Mammary epithelial cell (primary cell): ENCODE measurements at regions of chr5 and their contacts with region 1.

Region 1: GRCh38 chr5:159100025-159100781 is 487 bp upstream of the EBF1 start:
- DNase-seq: peak; percentile 87
- H3K4me3 ChIP-seq: peak overlapping the region in 2 of 3 experiments; percentile 13 to 35
- H3K27ac ChIP-seq: no peak overlapping the region
- H3K4me1 ChIP-seq: peaks cover 12% of the 10 kb centered on the region
- H3K27me3 ChIP-seq: peaks cover 55% of the 10 kb centered on the region
- CTCF ChIP-seq: no peak

Region 2: DNA sequence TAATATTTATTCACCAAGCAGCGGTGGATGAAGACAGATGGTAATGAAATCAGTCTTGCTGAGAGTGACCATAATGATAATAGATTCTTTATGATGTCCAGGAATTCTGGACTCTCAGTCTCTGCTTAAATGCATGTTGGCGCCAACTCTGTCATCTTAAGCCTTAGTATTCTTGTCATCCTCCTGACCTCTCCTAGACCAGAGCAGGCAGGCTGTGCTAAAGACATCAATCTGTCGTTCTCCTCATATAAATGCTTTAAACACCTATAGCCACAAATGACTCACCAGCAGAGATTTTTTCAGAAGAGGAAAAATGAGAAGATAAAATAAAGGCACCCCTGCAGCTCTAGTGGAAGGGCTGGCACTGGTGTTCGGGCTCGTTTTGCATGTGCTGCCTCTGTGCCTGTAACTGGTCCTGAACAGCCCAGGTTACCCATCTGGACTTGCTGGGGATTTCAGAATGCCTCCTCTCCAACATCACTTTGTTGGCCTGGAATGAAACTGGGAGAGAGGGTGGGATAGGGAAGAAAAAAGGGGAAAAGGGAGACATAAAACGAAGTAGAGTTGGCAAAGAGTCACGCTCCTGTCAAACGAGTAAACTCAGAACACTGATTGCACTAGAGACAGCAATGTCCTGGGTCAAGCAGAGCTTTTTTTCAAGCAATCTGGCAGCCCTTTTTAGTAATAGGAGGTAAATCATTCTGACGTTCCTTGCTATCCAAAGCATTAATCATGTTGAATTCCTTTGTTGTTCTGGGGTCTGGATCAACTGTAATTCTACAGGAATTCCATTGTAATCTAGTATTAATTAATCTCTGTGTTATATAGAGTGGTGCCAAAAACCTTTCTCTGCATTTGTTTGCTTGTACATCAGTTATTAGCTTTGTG is 1045.7 kb before region 1 on chr5:
- CTCF ChIA-PET with region 1: no interaction called
- dilution Hi-C with region 1: no loop called
- in situ Hi-C with region 1: no loop called
- intact Hi-C with region 1: loop called (anchors 5 kb)
- DNase-seq: no peak
- H3K4me3 ChIP-seq: no peak overlapping the region
- H3K27ac ChIP-seq: no peak overlapping the region
- H3K4me1 ChIP-seq: peaks cover 4% of the 10 kb centered on the region
- H3K27me3 ChIP-seq: no peaks in the 10 kb centered on the region
- CTCF ChIP-seq: no peak

Region 3: DNA sequence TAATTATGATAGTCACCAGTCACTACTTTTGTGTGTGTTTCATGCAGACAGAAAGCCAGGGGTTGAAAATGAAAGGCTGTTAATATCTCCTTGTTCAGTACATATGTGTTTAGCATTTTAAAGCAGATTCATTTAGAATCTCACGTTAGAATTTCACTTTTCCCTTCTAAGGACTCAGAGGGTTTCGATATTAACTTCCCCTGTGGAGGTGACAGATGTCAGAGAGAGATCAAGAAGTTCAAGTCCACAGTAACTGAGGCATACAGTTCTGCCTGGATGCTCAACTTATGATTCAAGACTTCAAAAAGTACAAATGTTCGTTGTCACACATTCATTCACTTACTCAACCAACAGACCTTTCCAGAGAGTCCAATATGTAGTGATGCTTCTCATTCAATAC is 251.6 kb before region 1 on chr5:
- CTCF ChIA-PET with region 1: no interaction called
- dilution Hi-C with region 1: no loop called
- in situ Hi-C with region 1: no loop called
- intact Hi-C with region 1: no loop called
- DNase-seq: no peak
- H3K4me3 ChIP-seq: no peak overlapping the region
- H3K27ac ChIP-seq: no peak overlapping the region
- H3K4me1 ChIP-seq: no peaks in the 10 kb centered on the region
- H3K27me3 ChIP-seq: no peaks in the 10 kb centered on the region
- CTCF ChIP-seq: no peak

Region 4: DNA sequence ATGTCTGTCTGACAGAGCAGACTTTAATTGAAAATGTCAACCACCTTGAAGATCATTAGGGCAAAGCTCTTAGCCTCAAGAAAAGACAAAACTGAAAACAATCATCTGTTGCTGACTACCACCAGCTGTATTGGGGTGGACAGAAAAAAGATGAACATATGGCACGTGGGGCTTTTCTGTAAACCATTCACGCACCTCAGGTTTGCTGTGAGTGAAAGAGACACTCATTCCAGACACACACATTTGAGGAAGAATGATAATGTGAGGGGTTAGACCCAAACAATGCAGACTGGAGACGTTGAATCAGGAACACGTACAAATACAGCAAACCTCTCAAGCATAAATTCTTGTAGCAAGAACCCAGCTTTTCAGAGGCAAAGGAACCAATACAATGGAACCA is 159.2 kb before region 1 on chr5:
- CTCF ChIA-PET with region 1: no interaction called
- dilution Hi-C with region 1: no loop called
- in situ Hi-C with region 1: no loop called
- intact Hi-C with region 1: no loop called
- DNase-seq: no peak
- H3K4me3 ChIP-seq: no peak overlapping the region
- H3K27ac ChIP-seq: no peak overlapping the region
- H3K4me1 ChIP-seq: peaks cover 7% of the 10 kb centered on the region
- H3K27me3 ChIP-seq: peaks cover 3% of the 10 kb centered on the region
- CTCF ChIP-seq: no peak

Region 5: DNA sequence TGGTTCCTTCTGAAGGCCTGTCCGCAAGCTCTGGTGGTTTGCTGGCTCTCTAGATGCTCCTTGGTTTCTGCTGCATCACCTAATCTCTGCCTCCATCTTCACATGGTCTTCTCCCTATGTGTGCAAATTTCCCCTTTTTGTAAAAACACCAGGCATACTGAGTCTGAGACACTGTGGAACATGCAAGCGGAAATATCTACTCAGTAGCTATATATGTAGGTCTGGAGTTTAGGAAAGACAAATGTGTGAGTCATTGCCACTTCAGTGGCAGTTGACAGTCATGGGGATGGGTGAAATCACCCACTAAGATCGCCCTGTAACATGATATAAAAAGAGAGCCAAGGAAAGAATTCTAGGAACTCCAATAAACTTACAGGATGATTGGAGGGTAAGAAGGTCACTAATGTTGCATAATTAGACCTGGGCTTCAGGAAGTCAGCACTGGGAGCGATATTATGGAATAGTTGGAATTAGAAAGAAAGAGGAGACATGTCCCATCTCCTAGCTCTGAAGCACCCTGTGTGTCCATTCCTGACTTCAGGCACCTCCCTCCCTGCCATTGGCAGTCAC is 140.2 kb after region 1 on chr5:
- CTCF ChIA-PET with region 1: no interaction called
- dilution Hi-C with region 1: no loop called
- in situ Hi-C with region 1: no loop called
- intact Hi-C with region 1: no loop called
- DNase-seq: no peak
- H3K4me3 ChIP-seq: no peak overlapping the region
- H3K27ac ChIP-seq: no peak overlapping the region
- H3K4me1 ChIP-seq: peaks cover 19% of the 10 kb centered on the region
- H3K27me3 ChIP-seq: no peaks in the 10 kb centered on the region
- CTCF ChIP-seq: no peak